ENCODE measurements at regions of chr1 and their contacts with region 1.

Region 1: GRCh38 chr1:205977402-205978014 is 25.7 kb downstream of the RAB7B start:
- DNase-seq: peak; percentile 69 to 86 (median 77)
- ATAC-seq: peak; percentile 65 to 82 (median 80)
- H3K4me3 ChIP-seq: no peak overlapping the region
- H3K27ac ChIP-seq: peak overlapping the region; percentile 28 to 89 (median 79)
- H3K4me1 ChIP-seq: peaks cover 0 to 25% (median 16%) of the 10 kb centered on the region in 12 donors
- H3K27me3 ChIP-seq: no peaks in the 10 kb centered on the region
- CTCF ChIP-seq: peak; percentile 91 to 99 (median 96)
- POLR2A ChIP-seq: no peak

Region 2: DNA sequence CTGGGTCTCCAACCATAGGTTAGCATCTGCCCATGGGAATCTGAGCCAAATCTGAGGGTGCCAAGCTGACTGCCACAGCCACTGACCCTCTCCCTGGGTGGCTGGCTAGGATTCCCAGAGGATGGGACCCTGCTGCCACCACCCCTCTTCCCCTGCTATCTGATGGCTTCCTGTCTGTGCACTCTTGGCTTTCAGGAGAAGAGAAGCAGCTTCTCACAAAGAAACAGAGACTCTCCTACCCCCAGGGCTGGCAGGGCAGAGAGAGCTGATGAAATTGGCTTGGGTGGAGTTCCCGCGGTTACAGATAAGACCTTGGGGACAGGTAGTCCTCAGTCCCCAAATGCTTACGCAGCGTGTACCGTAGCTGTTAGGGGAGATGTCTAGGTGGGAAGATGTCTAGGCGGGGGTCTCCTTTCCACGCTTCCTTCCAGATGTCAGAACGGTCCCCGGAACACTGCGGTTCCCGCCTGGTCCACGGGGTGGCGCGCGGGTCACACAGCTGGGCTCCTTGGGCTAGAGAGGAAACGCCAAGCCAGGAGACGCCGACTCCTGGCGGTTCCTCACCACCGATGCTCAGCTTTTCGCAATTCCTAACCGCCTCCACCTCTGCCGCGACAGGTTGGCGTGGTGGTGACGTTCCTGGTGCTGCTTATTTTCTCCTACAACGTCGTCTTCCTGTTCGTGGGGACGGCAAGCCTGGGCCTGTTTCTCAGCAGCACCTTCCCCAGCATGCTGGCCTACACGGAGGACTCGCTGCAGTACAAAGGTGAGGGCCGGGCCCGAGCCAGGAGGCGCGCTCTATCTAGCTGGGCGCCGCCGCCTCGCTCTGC is 385.8 kb before region 1 on chr1:
- intact Hi-C with region 1: loop called in 2 of 10 experiments (anchors 5 kb)
- DNase-seq: peak; percentile 82 to 91 (median 84)
- ATAC-seq: peak; percentile 76 to 97 (median 95)
- H3K4me3 ChIP-seq: peak overlapping the region in 11 of 12 donors; percentile 19 to 59 (median 48)
- H3K27ac ChIP-seq: peak overlapping the region in 3 of 12 donors; percentile 48 to 64 (median 58)
- H3K4me1 ChIP-seq: peaks cover 0 to 28% (median 13%) of the 10 kb centered on the region in 12 donors
- H3K27me3 ChIP-seq: no peaks in the 10 kb centered on the region
- CTCF ChIP-seq: peak; percentile 95 to 99 (median 98)
- POLR2A ChIP-seq: no peak

Region 3: DNA sequence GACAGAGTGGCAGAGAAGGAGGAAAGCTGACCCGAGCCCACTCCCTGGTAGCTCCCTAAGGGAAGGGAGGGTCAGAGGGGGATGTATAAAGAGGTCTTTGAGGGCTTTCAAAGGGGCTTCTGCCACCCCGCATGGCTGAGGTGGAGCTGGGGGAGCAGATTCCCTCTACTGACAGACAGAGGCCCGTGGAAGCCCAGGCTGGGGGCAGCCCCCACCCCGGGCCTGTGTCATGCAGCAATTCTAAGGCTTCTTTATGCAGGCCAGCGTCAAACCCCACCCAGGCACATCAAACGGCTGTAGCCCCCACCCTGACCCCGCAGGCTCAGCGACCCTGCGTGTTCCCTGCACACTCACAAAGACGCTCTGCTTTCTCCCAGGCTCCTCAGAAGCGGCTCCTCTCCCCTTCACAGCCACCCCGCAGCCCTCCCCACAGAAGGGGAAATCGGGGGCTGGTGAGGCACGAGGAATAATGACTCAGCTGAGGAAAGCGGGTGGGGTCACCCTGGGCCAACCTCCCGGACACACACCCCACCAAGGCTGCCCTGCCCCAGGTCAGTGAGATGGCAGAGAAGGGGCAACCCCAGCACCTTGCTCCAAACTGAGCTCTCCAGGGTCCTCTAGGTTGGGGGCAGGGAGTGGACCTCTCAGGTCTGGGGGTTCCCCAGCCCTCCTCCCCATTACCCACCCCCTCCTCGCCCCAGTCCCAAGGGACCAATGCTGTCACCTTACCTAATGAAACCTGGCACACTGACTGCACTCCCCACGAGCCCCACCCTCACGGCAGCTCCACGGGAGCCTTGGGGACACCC is 308.0 kb before region 1 on chr1:
- intact Hi-C with region 1: loop called in 3 of 10 experiments (anchors 5 to 10 kb)
- DNase-seq: no peak
- ATAC-seq: peak in 1 of 4 donors; percentile 8
- H3K4me3 ChIP-seq: no peak overlapping the region
- H3K27ac ChIP-seq: no peak overlapping the region
- H3K4me1 ChIP-seq: peaks cover 0 to 32% (median 2%) of the 10 kb centered on the region in 12 donors
- H3K27me3 ChIP-seq: no peaks in the 10 kb centered on the region
- CTCF ChIP-seq: no peak
- POLR2A ChIP-seq: no peak

Region 4: DNA sequence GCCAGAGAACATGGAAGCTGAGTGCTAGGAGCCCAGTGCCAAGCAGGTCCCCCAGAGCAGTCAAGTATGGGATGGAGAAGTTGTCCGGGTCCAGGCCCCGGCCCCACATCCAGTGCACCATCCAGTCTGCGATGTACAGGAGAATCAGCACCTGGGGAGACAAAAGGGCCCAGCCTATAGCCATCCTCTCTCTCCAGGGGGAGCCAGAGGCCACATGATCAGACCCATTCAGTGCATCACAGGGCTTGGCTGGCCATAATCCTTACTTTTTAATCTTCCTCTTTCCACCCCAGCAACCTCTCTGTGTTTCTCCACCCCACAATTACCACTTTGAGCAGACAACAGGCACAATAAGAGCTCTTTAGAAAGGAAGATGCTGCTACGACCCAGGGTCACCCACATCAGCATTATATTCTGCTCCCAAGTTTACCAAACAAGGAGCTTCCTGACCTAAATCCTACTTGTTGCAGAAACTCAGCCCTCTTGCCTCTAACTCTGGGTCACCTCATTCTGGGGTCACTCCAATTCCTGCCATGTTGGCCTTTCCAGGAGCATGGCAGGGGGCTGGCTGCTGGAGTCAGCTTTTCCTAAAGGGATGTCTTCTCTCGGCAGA is 185.8 kb before region 1 on chr1:
- intact Hi-C with region 1: loop called (anchors 1 to 5 kb)
- DNase-seq: peak in 3 of 5 donors; percentile 60 to 69 (median 61)
- ATAC-seq: peak; percentile 55 to 71 (median 62)
- H3K4me3 ChIP-seq: no peak overlapping the region
- H3K27ac ChIP-seq: peak overlapping the region in 4 of 12 donors; percentile 1 to 25 (median 10)
- H3K4me1 ChIP-seq: peaks cover 0 to 23% (median 1%) of the 10 kb centered on the region in 12 donors
- H3K27me3 ChIP-seq: no peaks in the 10 kb centered on the region
- CTCF ChIP-seq: peak; percentile 49 to 82 (median 74)
- POLR2A ChIP-seq: no peak

Region 5: DNA sequence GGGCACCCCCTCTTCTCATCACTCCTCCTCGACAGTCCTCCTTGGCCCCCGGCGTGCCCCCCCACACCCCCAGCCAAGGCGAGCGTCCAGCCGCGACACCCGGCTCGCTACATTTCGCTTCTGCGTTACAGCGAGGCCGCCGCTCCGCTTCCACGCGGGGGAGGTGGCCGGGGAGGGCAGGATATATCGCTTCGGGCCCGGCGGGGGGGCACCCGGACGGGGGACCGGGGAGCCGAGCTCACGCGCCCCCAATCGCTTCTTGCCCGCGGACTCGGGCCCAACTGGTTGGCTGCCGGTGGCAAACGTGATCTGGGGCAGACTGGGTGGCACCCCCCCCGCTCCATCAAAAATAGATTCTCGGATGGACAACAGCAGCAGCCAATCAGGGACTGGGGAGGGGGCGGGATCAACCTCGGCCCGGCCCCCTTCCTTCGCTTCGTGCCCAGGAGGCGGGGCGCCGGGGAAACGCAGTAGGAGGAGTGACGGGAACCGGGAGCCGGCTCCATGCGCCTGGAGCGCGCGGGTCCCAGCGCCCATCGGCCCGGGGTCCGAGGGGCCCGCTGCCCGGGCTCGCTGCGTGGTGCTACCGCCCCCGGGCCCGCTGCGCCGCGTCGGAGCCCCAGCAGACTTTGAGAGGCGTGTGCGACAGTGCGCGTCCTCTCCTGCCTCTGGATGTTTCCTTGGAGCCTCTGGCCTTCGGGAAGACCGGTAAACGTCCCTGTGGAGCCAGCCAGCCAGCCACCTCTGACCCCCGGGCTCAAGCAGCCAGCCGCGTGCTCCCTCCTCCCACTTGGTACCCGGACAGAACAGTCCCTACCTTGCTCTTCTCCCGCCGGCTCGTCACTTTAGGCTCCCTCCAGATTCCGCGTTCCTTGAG is 164.4 kb before region 1 on chr1 and contains the start of gene SLC41A1:
- intact Hi-C with region 1: loop called in 2 of 10 experiments (anchors 5 kb)
- DNase-seq: peak; percentile 94 to 96 (median 94)
- ATAC-seq: peak; percentile 86 to 93 (median 88)
- H3K4me3 ChIP-seq: peak within 1 kb of the TSS; percentile 63 to 95 (median 80)
- H3K27ac ChIP-seq: peak within 1 kb of the TSS; percentile 81 to 97 (median 92)
- H3K4me1 ChIP-seq: peaks cover 0 to 50% (median 32%) of the 10 kb centered on the region in 12 donors
- H3K27me3 ChIP-seq: no peaks in the 10 kb centered on the region
- CTCF ChIP-seq: peak in 1 of 12 donors; percentile 4
- POLR2A ChIP-seq: peak; percentile 56 to 92
- total RNA-seq, gene SLC41A1: 247 to 442 (median 333) TPM

Region 6: GRCh38 chr1:205945056-205945455 is 32.5 kb before region 1 on chr1:
- intact Hi-C with region 1: loop called in 1 of 10 experiments (anchors 2 kb)
- DNase-seq: no peak
- ATAC-seq: no peak
- H3K4me3 ChIP-seq: no peak overlapping the region
- H3K27ac ChIP-seq: no peak overlapping the region
- H3K4me1 ChIP-seq: peaks cover 0 to 12% (median 5%) of the 10 kb centered on the region in 12 donors
- H3K27me3 ChIP-seq: peaks cover 0 to 4% (median 0%) of the 10 kb centered on the region in 9 donors
- CTCF ChIP-seq: no peak
- POLR2A ChIP-seq: no peak

Measured in heart left ventricle (tissue), 16 donors.